ENCODE measurements at regions of chr1 and their contacts with region 1.

Region 1: GRCh38 chr1:153572569-153573015 is 6.9 kb upstream of the S100A2 start:
- DNase-seq: peak; percentile 77
- H3K4me3 Mint-ChIP-seq: no peak overlapping the region
- H3K27ac Mint-ChIP-seq: no peak overlapping the region
- H3K4me1 Mint-ChIP-seq: peaks cover 36% of the 10 kb centered on the region
- H3K27me3 Mint-ChIP-seq: peaks cover 32% of the 10 kb centered on the region

Region 2: GRCh38 chr1:152926091-152926490 is 646.5 kb before region 1 on chr1:
- CTCF ChIA-PET with region 1: no interaction called
- DNase-seq: no peak
- H3K4me3 Mint-ChIP-seq: no peak overlapping the region
- H3K27ac Mint-ChIP-seq: no peak overlapping the region
- H3K4me1 Mint-ChIP-seq: no peaks in the 10 kb centered on the region
- H3K27me3 Mint-ChIP-seq: peaks cover 3% of the 10 kb centered on the region

Region 3: GRCh38 chr1:153526132-153526543 is 46.5 kb before region 1 on chr1:
- CTCF ChIA-PET with region 1: interaction called, 204 read pairs
- DNase-seq: no peak
- H3K4me3 Mint-ChIP-seq: no peak overlapping the region
- H3K27ac Mint-ChIP-seq: no peak overlapping the region
- H3K4me1 Mint-ChIP-seq: peaks cover 12% of the 10 kb centered on the region
- H3K27me3 Mint-ChIP-seq: peaks cover 7% of the 10 kb centered on the region

Region 4: DNA sequence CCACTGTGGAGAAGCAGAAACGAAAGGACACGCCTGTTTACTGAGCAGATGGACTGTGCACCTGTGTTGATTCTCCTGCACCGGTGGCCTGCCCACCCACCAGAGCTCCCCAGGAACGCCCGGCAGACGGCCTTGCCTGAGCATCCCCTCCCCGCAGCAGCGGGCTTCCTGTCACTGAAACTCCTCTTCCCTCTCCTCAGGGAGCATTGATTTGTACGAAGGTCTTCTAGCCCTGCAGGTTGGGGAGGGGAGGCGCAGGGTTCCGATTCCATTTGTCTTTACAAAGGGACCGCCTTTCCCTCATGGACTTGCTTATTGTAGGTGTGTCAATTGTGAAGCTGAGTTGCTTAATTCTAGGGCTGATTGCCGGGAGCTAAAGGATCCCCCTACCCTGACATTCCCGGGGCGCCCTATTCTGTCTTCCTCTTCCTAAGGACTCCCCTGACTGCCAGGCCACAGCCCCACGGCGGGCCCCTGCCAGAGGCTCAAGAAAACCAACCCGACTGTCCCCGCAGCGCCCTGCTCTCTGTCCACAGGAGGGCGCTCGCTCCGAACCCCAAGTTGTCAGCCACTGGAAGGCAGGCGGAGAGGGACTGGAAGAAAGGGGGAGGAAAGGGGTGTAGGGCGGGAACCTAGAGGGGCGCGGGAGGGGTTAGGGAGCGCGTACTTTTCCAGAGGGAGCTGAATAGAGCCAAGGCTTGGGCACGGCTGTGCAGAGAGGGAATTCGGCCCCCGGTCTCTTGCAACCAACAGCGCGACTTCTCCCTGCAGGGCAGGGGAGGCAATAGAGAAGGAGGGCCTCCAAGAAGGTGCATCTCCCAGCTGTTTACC is 39.6 kb before region 1 on chr1:
- CTCF ChIA-PET with region 1: interaction called, 204 read pairs
- DNase-seq: peak; percentile 87
- H3K4me3 Mint-ChIP-seq: peak overlapping the region; percentile 82
- H3K27ac Mint-ChIP-seq: peak overlapping the region; percentile 91
- H3K4me1 Mint-ChIP-seq: peaks cover 62% of the 10 kb centered on the region
- H3K27me3 Mint-ChIP-seq: no peaks in the 10 kb centered on the region

Region 5: DNA sequence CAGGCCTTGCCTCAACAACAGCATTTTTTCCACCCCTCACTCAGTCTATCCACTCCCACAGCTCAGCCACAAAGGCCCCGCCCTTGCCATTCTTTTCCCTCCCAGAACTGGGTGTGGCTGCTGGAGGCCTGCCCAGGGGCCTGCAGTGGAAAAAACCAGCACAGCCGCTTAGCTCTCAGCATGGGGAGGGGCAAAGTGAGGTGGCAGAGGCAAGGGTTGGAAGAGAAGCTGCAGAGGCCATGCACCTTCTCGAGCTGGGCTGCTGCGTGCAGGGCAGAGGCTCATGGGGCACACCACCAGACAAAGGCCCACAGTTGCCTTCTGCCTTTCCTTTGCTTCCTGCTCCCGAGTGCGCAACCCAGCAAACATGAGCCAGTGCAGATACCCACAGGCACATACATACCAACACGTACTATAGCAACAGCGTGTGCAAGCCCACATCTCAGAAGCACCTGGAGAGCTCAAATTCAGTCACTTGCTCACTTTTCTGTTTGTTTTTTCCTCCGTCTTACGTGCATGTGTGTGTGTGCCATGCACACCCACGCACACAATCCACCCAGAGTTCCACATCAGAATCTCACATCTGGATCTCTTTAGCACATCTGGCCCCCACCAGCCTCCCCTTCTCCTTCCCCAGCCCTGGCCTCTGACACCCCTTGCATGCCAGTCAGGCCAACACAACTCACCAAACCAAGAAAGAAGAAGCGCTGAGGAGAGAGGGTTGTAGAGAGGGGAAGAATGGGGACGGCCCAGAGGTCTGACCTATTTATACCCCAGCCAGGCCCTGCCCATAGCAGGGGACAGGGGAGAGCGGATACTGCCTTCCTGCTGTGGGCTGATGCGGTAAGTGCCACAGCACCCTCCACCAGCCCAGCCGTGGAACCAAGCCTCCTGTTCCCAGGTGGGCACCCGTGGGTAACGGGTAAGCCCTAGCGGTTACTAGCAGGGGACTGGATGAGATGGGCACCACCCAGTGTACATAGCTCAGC is 27.2 kb before region 1 on chr1 and contains the start of gene S100A4:
- CTCF ChIA-PET with region 1: interaction called, 17 read pairs
- DNase-seq: peak; percentile 96
- H3K4me3 Mint-ChIP-seq: peak within 1 kb of the TSS; percentile 93
- H3K27ac Mint-ChIP-seq: peak within 1 kb of the TSS; percentile 99
- H3K4me1 Mint-ChIP-seq: peaks cover 94% of the 10 kb centered on the region
- H3K27me3 Mint-ChIP-seq: peaks cover 18% of the 10 kb centered on the region

Region 6: DNA sequence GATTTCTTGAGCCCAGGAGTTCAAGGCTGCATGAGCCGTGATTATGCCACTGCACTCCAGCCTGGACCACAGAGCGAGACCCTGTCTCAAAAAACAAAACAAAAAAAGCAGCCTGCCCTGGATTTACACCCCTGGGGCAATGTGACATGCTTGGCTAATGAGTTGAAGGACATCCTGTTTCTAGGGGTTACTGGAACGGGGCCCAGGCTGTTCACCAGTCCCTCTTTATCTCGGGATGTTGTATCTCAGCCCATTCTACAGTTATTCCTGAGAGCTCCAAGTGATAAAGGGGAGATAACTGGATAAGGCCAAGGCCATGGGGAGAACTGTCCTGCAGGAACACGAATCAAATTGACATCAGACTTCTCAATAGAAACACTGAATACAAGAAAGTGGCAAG is 14.7 kb after region 1 on chr1:
- CTCF ChIA-PET with region 1: no interaction called
- DNase-seq: no peak
- H3K4me3 Mint-ChIP-seq: no peak overlapping the region
- H3K27ac Mint-ChIP-seq: no peak overlapping the region
- H3K4me1 Mint-ChIP-seq: no peaks in the 10 kb centered on the region
- H3K27me3 Mint-ChIP-seq: peaks cover 26% of the 10 kb centered on the region

Region 7: DNA sequence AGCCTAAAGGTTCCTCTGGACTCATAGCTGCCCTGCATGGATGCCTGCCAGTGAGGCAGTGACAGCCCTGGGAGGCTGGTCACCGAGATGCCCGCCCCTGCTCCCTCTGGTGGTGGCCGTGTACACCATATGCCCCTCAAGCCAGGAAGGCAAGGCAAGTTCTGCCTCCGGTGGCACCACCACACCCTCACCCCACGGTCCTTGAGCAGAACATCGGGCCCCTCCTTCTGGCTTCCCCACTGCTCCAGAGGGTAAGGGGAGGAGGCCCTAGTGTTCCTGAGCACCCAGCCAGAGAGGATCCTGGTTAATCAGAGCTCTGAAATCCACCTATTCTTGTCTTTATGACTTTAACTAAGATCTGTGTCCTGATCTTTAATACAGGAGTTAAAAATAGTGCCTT is 45.1 kb after region 1 on chr1:
- CTCF ChIA-PET with region 1: interaction called, 31 read pairs
- DNase-seq: peak; percentile 79
- H3K4me3 Mint-ChIP-seq: no peak overlapping the region
- H3K27ac Mint-ChIP-seq: no peak overlapping the region
- H3K4me1 Mint-ChIP-seq: peaks cover 3% of the 10 kb centered on the region
- H3K27me3 Mint-ChIP-seq: peaks cover 13% of the 10 kb centered on the region

Region 8: DNA sequence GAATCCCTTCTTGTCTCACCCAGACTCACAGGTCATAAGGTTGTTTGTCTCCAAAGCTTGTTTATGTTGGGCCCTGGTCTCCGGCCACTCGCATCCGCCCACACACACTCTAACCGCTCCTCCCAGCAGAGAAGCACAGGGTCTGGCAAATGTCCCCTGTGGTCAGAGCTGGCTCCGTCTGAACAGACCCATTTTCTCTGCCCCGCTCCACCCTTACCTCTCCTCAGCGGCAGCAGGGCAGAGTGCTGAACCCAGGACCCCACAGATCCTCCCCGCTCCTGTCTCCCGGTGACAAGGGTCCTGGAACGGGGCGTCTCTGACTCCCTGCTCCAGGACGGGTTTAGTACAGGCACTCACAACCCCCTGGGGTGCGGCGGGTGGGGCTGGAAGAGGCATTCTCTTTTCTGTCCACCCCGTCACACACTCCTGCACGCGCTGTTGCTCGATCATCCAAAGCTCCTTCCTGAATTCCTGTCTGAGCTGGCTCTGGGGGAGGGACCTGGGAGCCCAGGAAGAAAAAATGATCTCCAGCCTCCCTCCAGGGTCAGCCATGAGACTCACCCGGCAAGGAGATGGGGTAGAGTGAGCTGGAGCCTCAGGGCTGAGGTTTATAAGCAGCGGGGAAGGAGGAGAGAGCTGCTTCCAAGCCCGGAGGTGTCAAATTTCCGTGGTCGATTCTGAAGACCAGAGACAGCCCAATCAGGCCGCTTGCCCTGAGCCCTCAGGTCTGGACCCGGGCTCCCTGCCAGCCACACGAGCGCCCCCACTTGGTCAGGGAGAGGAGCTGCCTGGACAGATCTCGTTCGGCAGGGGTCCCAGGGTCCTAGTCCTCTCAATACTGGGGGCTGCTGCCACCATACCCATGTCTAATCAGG is 54.6 kb after region 1 on chr1 and contains the start of gene S100A13:
- CTCF ChIA-PET with region 1: interaction called, 23 read pairs
- DNase-seq: no peak
- H3K4me3 Mint-ChIP-seq: no peak within 1 kb of the TSS
- H3K27ac Mint-ChIP-seq: no peak within 1 kb of the TSS
- H3K4me1 Mint-ChIP-seq: peaks cover 8% of the 10 kb centered on the region
- H3K27me3 Mint-ChIP-seq: peaks cover 31% of the 10 kb centered on the region

Region 9: DNA sequence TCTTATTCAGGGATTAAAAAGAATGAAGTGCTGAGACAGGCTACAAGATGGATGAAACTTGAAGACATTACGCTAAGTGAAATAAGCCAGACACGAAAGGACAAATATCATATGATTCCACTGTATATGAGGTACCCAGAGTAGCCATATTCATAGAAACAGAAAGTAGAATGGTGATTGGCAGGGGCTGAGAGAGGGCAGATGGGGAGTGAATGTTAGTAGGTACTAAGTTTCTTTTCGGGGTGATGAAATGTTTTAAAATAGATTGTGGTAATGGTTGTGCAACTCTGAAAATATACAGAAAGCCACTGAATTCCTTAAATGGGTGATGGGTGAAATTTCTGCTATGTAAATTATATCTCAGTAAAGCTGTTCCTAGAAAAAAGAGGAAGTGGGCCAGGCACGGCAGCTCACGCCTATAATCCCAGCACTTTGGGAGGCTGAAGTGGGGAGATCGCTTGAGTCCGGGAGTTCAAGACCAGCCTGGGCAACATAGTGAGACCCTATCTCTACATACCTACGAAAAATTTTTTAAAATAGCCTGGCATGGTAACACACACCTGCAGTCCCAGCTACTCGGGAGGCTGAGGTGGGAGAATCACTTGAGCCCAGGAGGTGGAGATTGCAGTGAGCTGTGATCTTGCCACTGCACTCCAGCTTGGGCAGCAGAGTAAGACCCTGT is 218.5 kb after region 1 on chr1:
- CTCF ChIA-PET with region 1: no interaction called
- DNase-seq: peak; percentile 46
- H3K4me3 Mint-ChIP-seq: peak overlapping the region; percentile 3
- H3K27ac Mint-ChIP-seq: peak overlapping the region; percentile 65
- H3K4me1 Mint-ChIP-seq: peaks cover 55% of the 10 kb centered on the region
- H3K27me3 Mint-ChIP-seq: peaks cover 38% of the 10 kb centered on the region